PC-3 (cell line): ENCODE measurements at regions of chr15 and their contacts with region 1.

Region 1: DNA sequence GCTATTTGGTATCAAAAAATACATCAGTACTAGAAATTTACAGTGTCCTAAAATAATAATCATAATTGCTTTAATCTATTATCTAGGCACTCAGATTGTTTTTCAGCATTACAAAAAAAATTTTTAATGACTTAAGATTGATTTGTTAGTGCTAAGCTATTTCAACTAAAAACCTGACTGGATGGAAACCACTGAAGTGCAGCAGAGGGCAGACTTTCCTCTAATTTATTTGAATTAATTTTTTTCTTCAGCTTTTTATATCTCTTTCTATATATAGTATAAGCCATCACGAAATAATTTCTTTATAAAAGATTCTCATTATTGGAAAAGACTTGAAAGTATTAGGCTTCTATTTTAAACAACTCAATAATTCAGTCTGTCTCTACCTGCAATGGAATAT is 131.4 kb downstream of the IQCH start:
- DNase-seq: no peak
- ATAC-seq: no peak
- H3K4me3 ChIP-seq: no peak overlapping the region
- H3K27ac ChIP-seq: no peak overlapping the region
- H3K4me1 ChIP-seq: no peaks in the 10 kb centered on the region
- H3K27me3 ChIP-seq: no peaks in the 10 kb centered on the region
- CTCF ChIP-seq: no peak

Region 2: GRCh38 chr15:67150028-67150860 is 235.7 kb before region 1 on chr15:
- CTCF ChIA-PET with region 1: no interaction called
- POLR2A ChIA-PET with region 1: no interaction called
- intact Hi-C with region 1: no loop called
- DNase-seq: peak; percentile 94
- ATAC-seq: peak; percentile 56
- H3K4me3 ChIP-seq: peak overlapping the region; percentile 15; the same call in 1 of the 2 replicates
- H3K27ac ChIP-seq: peak overlapping the region; percentile 100
- H3K4me1 ChIP-seq: peaks cover 61% of the 10 kb centered on the region
- H3K27me3 ChIP-seq: no peaks in the 10 kb centered on the region
- CTCF ChIP-seq: no peak

Region 3: GRCh38 chr15:67433495-67434099 is 47.6 kb after region 1 on chr15:
- CTCF ChIA-PET with region 1: interaction called, 4 read pairs
- POLR2A ChIA-PET with region 1: no interaction called
- intact Hi-C with region 1: loop called (anchors 1 kb)
- DNase-seq: peak; percentile 67
- ATAC-seq: peak; percentile 76
- H3K4me3 ChIP-seq: no peak overlapping the region
- H3K27ac ChIP-seq: no peak overlapping the region
- H3K4me1 ChIP-seq: no peaks in the 10 kb centered on the region
- H3K27me3 ChIP-seq: no peaks in the 10 kb centered on the region
- CTCF ChIP-seq: peak; percentile 76